Mammary epithelial cell (primary cell): ENCODE measurements at regions of chr10 and their contacts with region 1.

Region 1: DNA sequence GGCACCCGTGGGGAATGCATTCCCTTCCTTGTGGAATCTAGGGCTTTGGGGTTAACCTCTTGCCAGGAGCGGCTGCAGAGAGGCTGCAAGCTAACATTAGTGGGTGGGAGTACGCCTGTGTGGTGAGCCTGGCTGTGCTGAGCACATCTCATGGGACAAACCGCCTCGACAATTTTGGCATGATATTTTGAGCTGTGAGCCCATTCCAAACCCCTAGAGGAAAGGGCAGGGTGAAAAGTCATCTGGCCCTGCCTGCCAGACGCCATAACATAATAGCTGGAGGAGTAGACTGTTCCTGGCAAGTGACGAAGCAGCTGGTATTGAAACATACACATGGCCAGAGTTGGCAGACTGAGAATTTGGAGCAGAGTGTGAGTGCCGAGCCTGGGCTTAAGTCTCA is 110.0 kb downstream of the TACC2 start:
- DNase-seq: no peak
- H3K4me3 ChIP-seq: no peak overlapping the region
- H3K27ac ChIP-seq: no peak overlapping the region
- H3K4me1 ChIP-seq: peaks cover 16% of the 10 kb centered on the region
- H3K27me3 ChIP-seq: no peaks in the 10 kb centered on the region
- CTCF ChIP-seq: no peak

Region 2: GRCh38 chr10:121994390-121994961 is 104.4 kb before region 1 on chr10:
- CTCF ChIA-PET with region 1: no interaction called
- dilution Hi-C with region 1: loop called (anchors 5 kb)
- in situ Hi-C with region 1: no loop called
- intact Hi-C with region 1: no loop called
- DNase-seq: peak; percentile 56
- H3K4me3 ChIP-seq: no peak overlapping the region
- H3K27ac ChIP-seq: peak overlapping the region; percentile 34
- H3K4me1 ChIP-seq: peaks cover 28% of the 10 kb centered on the region
- H3K27me3 ChIP-seq: no peaks in the 10 kb centered on the region
- CTCF ChIP-seq: no peak